ENCODE measurements at regions of chr11 and their contacts with region 1.

Region 1: DNA sequence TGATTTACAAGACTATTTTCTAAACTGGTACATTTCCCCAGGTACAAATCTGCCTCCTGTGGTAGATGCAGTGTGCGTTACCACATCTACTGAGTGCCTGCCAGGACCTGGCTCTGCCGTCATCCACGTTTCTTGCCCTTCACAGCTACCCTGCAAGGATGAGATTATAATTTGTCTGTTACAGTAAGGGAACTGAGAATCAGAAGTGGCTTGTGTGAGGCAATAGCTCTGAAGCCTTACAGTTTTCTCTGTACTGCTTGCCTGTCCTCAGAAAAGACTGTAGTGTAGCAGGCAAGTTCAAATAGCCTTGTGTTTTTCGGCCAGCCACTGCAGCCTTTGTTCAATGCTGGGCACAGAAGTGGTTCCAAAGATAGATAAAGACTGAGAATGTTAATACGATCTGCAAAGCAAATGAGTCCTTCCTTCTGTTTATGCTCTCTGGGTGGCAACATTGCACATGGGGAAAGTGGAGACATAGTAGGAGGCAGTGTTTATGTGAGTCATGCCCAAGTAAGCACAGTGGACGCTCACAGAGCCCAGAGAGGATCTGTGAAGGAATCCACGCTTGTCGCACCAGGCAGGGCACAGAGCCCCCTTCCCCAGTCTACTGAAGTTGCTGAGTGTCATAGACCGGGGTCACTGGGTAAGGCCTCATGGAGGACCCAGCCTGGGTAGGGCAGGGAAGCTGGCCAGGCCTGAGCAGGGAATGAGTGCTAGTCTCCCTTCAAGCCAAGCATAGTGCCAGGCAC is 49.1 kb downstream of the MICAL2 start:
- DNase-seq: no peak

Region 2: DNA sequence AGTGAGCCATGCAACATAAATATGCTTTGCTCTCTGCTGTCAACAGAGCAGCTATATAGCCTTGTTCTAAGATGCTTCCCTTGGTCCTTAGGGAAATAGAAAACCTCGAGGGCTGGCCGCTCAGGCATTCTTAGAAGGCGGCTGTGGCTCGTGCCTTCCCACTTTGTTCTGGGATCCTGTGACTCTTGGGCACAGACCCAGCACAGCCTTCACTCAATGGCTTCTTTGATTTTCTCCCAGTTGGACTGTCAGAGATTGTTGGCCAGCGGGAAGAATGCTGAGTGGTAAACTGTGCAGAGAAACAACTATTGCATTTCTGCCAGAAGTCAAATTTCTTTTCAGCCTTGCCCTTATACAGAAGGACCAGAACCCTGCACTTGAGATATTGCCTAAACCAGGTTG is 58.7 kb before region 1 on chr11:
- intact Hi-C with region 1: loop called (anchors 5 kb)
- DNase-seq: no peak

Region 3: GRCh38 chr11:12182676-12183541 is 23.4 kb after region 1 on chr11:
- intact Hi-C with region 1: no loop called
- DNase-seq: no peak

Region 4: DNA sequence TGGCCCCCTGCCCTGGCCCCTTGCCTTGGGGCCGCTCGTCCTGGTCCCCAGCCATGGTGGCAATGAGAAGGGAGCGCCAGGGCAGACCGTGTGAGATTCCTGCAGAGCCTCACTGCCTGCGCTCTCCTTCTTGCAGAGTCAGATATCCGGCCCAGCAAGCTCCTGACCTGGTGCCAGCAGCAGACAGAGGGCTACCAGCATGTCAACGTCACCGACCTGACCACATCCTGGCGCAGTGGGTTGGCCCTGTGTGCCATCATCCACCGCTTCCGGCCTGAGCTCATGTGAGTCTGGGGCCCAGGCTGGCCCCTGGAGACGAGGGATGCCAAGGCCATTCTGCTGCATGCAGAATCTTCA is 65.0 kb after region 1 on chr11:
- intact Hi-C with region 1: loop called (anchors 5 kb)
- DNase-seq: peak; percentile 93

Region 5: GRCh38 chr11:12235947-12236743 is 76.6 kb after region 1 on chr11:
- intact Hi-C with region 1: loop called (anchors 5 kb)
- DNase-seq: no peak

Region 6: GRCh38 chr11:12281571-12282478 is 122.3 kb after region 1 on chr11:
- intact Hi-C with region 1: no loop called
- DNase-seq: peak; percentile 92